IMR-90 (cell line): ENCODE measurements at regions of chr15 and their contacts with region 1.

Region 1: DNA sequence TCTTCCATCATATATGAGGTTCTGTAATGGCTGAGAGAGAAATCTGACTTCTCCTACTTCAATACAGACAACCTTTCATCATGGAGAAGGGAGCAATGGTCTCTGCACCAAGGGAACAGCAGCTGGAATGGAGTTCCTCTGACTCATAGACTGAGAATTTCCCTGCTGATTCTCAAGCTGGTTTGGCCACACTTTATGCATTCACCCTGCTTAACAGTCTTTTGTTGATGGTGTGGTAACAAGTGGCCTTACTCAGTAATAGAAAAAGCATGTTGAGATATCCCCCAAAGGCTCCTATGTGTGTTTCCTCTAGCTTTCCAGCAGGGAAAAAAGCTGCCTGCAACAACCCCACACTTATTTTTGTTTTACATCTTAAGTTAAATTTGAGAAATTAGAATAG is 138.1 kb downstream of the GREM1 start:
- DNase-seq: peak; percentile 100
- ATAC-seq: peak; percentile 83
- H3K4me3 ChIP-seq: no peak overlapping the region
- H3K27ac ChIP-seq: peak overlapping the region; percentile 5; the same call in 1 of the 2 replicates
- H3K4me1 ChIP-seq: peaks cover 27% of the 10 kb centered on the region
- H3K27me3 ChIP-seq: no peaks in the 10 kb centered on the region
- CTCF ChIP-seq: peak; percentile 34; the same call in 1 of the 2 replicates
- POLR2A ChIP-seq: no peak; the same call in 1 of the 2 replicates
- RAD21 ChIP-seq: peak; percentile 40

Region 2: DNA sequence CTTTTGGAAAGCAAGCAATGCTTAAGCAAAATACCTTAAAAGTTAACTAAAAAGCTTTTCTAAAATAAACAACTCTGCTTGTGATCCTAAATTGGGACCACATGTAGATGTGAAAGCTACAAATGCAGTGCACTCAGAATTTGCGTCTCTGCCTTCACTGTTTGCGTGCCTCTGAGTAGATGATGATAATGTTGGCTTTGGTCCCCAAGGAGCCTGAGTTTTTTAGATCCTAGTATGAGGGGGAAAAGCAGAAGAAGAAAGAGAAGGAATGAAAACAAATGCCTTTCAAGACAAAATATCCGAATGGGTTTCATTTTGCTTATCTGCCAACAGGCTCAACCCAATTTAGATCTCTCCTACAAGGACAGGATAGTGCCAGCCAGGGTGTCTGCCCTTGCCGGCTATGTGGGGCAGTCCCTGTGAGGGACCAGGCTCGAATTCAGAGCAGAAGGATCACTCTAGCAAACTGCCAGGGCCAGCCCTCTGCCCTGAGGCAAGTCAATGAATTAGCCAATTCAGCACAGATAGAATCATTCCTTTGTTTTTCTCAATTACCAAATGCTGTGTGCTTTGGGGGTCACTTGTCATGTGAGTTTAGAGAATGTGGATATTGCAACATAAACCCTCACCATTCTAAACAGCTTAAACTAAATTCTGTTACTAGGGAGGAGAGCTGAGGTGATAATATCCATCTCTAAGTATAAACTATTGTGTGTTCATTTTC is 185.9 kb before region 1 on chr15:
- CTCF ChIA-PET with region 1: no interaction called
- POLR2A ChIA-PET with region 1: no interaction called
- dilution Hi-C with region 1: no loop called
- in situ Hi-C with region 1: no loop called
- intact Hi-C with region 1: loop called (anchors 5 kb)
- DNase-seq: peak; percentile 45
- ATAC-seq: peak; percentile 82
- H3K4me3 ChIP-seq: no peak overlapping the region
- H3K27ac ChIP-seq: peak overlapping the region; percentile 84; the same call in 1 of the 2 replicates
- H3K4me1 ChIP-seq: peaks cover 11% of the 10 kb centered on the region
- H3K27me3 ChIP-seq: no peaks in the 10 kb centered on the region
- CTCF ChIP-seq: no peak
- POLR2A ChIP-seq: no peak
- RAD21 ChIP-seq: no peak

Region 3: DNA sequence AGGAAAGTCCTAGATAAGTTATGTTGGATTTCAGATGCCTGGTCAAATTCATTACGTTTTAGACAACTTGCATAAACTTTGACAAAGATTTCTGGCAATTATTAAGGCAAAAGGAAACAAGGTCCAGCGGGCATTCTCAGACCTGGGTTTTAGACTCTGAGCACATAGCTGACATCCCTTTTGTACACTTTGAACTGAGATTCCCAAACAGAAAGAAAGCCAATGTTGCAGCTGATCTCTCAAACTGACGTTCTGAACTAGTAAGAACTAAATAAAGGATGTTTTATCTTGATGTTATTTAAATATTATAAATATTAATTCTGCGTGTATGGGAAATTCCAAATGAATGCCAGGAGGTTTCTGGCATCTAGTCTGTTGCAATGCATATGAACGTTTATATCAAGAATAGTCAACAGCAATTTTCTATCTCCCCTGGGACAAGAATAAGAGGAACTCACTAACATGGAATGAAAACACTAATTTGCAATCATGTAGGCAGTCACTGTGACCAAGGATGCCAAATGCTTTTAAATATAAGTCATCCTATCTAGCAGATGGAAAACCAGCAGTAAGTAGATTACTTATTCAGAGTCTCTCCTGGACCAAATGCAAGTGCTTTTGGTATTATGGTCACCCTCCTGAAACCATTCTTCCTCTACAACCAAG is 63.9 kb after region 1 on chr15:
- CTCF ChIA-PET with region 1: no interaction called
- POLR2A ChIA-PET with region 1: no interaction called
- dilution Hi-C with region 1: no loop called
- in situ Hi-C with region 1: no loop called
- intact Hi-C with region 1: no loop called
- DNase-seq: peak; percentile 99
- ATAC-seq: peak; percentile 88
- H3K4me3 ChIP-seq: no peak overlapping the region
- H3K27ac ChIP-seq: peak overlapping the region; percentile 90
- H3K4me1 ChIP-seq: peaks cover 32% of the 10 kb centered on the region
- H3K27me3 ChIP-seq: no peaks in the 10 kb centered on the region
- CTCF ChIP-seq: no peak
- POLR2A ChIP-seq: peak; percentile 45; the same call in 1 of the 2 replicates
- RAD21 ChIP-seq: no peak; the same call in 1 of the 2 replicates

Region 4: GRCh38 chr15:33089878-33090757 is 234.2 kb after region 1 on chr15:
- CTCF ChIA-PET with region 1: no interaction called
- POLR2A ChIA-PET with region 1: no interaction called
- dilution Hi-C with region 1: no loop called
- in situ Hi-C with region 1: no loop called
- intact Hi-C with region 1: no loop called
- DNase-seq: peak; percentile 94
- ATAC-seq: peak; percentile 75
- H3K4me3 ChIP-seq: peak overlapping the region; percentile 47
- H3K27ac ChIP-seq: peak overlapping the region; percentile 79
- H3K4me1 ChIP-seq: peaks cover 26% of the 10 kb centered on the region
- H3K27me3 ChIP-seq: no peaks in the 10 kb centered on the region
- CTCF ChIP-seq: no peak
- POLR2A ChIP-seq: no peak
- RAD21 ChIP-seq: no peak

Region 5: GRCh38 chr15:33194704-33195670 is 339.0 kb after region 1 on chr15 and contains the start of gene FMN1:
- CTCF ChIA-PET with region 1: no interaction called
- POLR2A ChIA-PET with region 1: no interaction called
- dilution Hi-C with region 1: no loop called
- in situ Hi-C with region 1: no loop called
- intact Hi-C with region 1: no loop called
- DNase-seq: peak; percentile 84
- ATAC-seq: peak; percentile 100
- H3K4me3 ChIP-seq: peak within 1 kb of the TSS; percentile 79
- H3K27ac ChIP-seq: no peak within 1 kb of the TSS
- H3K4me1 ChIP-seq: peaks cover 2% of the 10 kb centered on the region; the same call in 1 of the 2 replicates
- H3K27me3 ChIP-seq: peaks cover 37% of the 10 kb centered on the region
- CTCF ChIP-seq: no peak
- POLR2A ChIP-seq: no peak
- RAD21 ChIP-seq: no peak
- total RNA-seq, gene FMN1: 17.6 and 29.4 TPM in 2 replicates